Activated naive CD4-positive, alpha-beta T cell treated with anti-CD3 and anti-CD28 coated beads for 36 hours (primary cell): ENCODE measurements at regions of chr20 and their contacts with region 1.

Region 1: GRCh38 chr20:8722276-8722928 is 346.5 kb upstream of the PLCB4 start:
- DNase-seq: peak; percentile 46
- H3K4me3 Mint-ChIP-seq: no peak overlapping the region
- H3K27ac Mint-ChIP-seq: no peak overlapping the region
- H3K4me1 Mint-ChIP-seq: no peaks in the 10 kb centered on the region
- H3K27me3 Mint-ChIP-seq: peaks cover 2% of the 10 kb centered on the region

Region 2: DNA sequence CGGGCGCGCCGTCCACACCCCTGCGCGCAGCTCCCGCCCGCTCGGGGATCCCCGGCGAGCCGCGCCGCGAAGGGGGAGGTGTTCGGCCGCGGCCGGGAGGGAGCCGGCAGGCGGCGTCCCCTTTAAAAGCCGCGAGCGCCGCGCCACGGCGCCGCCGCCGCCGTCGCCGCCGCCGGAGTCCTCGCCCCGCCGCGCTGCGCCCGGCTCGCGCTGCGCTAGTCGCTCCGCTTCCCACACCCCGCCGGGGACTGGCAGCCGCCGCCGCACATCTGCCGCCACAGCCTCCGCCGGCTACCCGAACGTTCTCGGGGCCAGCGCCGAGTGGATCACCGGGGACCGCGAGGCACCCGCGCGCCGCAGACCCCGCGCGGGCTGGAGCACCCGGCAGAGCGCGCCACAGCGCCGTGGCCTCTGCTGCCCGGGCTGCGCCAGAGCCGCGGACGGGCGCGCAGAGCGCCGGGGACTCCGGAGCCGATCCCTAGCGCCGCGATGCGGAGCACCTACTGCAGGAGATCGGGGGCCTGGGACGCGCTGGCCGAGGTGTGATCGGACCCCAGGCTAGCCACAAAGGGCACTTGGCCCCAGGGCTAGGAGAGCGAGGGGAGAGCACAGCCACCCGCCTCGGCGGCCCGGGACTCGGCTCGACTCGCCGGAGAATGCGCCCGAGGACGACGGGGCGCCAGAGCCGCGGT is 1954.7 kb before region 1 on chr20 and contains the start of gene BMP2:
- CTCF ChIA-PET with region 1: interaction called, 3 read pairs
- intact Hi-C with region 1: loop called (anchors 5 kb)
- DNase-seq: no peak
- H3K4me3 Mint-ChIP-seq: no peak within 1 kb of the TSS
- H3K27ac Mint-ChIP-seq: no peak within 1 kb of the TSS
- H3K4me1 Mint-ChIP-seq: peaks cover 8% of the 10 kb centered on the region
- H3K27me3 Mint-ChIP-seq: peaks cover 56% of the 10 kb centered on the region
- total RNA-seq, gene BMP2: not detected

Region 3: GRCh38 chr20:8043687-8044282 is 678.6 kb before region 1 on chr20:
- CTCF ChIA-PET with region 1: interaction called, 45 read pairs
- intact Hi-C with region 1: loop called (anchors 1 kb)
- DNase-seq: peak; percentile 17
- H3K4me3 Mint-ChIP-seq: no peak overlapping the region
- H3K27ac Mint-ChIP-seq: no peak overlapping the region
- H3K4me1 Mint-ChIP-seq: peaks cover 2% of the 10 kb centered on the region
- H3K27me3 Mint-ChIP-seq: peaks cover 8% of the 10 kb centered on the region

Region 4: DNA sequence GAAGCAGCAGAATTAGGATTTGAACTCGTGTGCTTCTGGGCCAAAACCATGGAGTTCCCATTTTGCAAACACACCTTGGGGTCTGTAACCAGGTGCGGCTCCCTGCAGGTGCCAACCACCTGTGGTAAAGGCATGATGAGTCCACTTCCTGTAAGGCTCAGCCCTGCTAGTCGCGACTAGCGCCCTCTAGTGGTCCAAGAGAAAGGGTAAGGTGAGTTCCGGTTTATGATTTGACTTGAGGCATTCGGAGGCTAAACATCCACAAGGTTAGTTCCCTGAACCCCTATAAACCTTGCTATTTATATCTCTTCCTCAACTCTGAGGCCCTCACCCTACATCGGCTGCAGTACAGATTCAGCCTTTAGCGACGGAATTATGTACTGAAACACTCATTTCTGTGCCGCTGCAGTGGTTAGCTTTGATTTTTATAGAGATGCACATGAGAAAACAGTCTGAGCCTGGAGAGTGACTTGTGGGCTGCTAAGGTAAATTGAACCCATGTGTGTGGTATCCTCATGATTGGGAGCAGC is 416.9 kb before region 1 on chr20:
- CTCF ChIA-PET with region 1: no interaction called
- intact Hi-C with region 1: loop called (anchors 1 kb)
- DNase-seq: peak; percentile 83
- H3K4me3 Mint-ChIP-seq: no peak overlapping the region
- H3K27ac Mint-ChIP-seq: no peak overlapping the region
- H3K4me1 Mint-ChIP-seq: no peaks in the 10 kb centered on the region
- H3K27me3 Mint-ChIP-seq: peaks cover 2% of the 10 kb centered on the region

Region 5: DNA sequence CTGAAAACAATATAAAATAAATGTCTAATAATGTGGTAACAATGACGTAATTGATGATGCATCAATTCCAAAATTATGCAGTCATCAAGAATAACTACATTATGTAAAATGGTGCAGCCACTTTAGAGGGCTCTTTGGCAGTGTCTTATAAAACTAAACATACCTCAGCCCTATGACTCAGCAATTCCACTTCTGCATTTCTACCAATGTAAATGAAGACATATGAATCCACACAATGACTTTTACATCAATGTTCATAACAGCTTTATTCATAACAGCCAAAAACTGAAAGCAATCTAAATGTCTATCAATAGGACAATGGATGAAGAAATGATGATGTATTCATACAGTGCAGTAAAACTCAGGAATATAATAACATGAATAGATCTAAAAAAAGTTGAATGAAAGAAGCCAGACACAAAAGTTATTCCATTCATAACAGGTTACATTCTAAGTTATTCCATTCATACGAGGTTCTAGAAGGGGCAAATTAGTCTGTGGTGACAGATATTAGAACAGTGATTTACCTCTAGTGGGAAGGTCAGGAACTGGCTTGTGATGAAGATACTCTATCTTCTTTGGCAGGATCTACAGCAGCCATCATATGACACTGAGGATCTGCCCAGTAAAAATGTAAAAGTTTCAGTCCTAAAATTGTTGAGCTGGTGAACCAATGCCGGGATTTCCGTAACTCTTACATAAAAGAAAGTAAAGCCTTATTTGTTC is 194.2 kb before region 1 on chr20:
- CTCF ChIA-PET with region 1: no interaction called
- intact Hi-C with region 1: no loop called
- DNase-seq: no peak
- H3K4me3 Mint-ChIP-seq: no peak overlapping the region
- H3K27ac Mint-ChIP-seq: no peak overlapping the region
- H3K4me1 Mint-ChIP-seq: no peaks in the 10 kb centered on the region
- H3K27me3 Mint-ChIP-seq: no peaks in the 10 kb centered on the region

Region 6: GRCh38 chr20:8635048-8635572 is 87.3 kb before region 1 on chr20:
- CTCF ChIA-PET with region 1: no interaction called
- intact Hi-C with region 1: no loop called
- DNase-seq: no peak
- H3K4me3 Mint-ChIP-seq: no peak overlapping the region
- H3K27ac Mint-ChIP-seq: no peak overlapping the region
- H3K4me1 Mint-ChIP-seq: no peaks in the 10 kb centered on the region
- H3K27me3 Mint-ChIP-seq: peaks cover 3% of the 10 kb centered on the region

Region 7: DNA sequence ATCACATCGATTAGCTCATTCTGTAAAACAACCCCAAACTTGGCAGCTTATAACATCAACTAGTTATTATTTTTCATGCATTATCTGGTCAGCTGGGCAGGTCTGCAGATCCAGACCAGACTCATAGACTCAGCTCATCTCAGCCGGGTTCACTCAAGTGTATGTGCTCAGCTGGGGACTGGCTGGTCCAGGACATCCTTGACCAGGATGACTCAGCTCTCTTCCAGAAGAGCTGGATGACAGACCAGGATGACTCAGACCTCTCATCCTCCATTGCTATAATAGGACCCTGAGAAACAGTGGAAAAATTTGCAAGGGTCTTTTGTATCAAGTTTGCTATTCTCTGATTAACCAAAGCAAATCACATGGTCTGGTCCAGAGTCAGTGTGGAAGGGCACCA is 34.0 kb after region 1 on chr20:
- CTCF ChIA-PET with region 1: interaction called, 11 read pairs
- intact Hi-C with region 1: no loop called
- DNase-seq: no peak
- H3K4me3 Mint-ChIP-seq: no peak overlapping the region
- H3K27ac Mint-ChIP-seq: no peak overlapping the region
- H3K4me1 Mint-ChIP-seq: no peaks in the 10 kb centered on the region
- H3K27me3 Mint-ChIP-seq: peaks cover 1% of the 10 kb centered on the region